ENCODE measurements at regions of chr5 and their contacts with region 1.

Region 1: GRCh38 chr5:115419846-115420585 is 123.6 kb upstream of the CCDC112 start:
- DNase-seq: no peak
- ATAC-seq: peak in 1 of 2 donors; percentile 84

Region 2: DNA sequence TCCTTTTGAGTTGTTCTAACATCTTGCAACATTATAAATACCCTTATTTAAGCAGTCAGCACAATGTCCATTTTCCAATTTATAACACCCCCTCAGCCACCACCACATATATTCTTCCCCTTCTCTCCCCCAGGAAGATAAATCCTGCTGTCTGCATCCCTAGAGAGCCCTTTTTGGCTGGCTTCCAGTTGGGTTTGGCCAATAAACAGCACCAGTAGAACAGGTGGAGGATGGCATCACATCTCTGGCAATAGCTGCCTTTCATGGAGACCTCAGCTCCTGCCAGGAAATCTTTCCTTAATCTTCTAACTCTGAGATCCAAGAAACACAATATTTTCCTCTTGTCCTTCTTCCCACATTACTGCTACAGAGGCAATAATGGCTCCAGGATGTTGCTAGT is 304.0 kb before region 1 on chr5:
- intact Hi-C with region 1: no loop called
- DNase-seq: no peak
- ATAC-seq: no peak

Region 3: DNA sequence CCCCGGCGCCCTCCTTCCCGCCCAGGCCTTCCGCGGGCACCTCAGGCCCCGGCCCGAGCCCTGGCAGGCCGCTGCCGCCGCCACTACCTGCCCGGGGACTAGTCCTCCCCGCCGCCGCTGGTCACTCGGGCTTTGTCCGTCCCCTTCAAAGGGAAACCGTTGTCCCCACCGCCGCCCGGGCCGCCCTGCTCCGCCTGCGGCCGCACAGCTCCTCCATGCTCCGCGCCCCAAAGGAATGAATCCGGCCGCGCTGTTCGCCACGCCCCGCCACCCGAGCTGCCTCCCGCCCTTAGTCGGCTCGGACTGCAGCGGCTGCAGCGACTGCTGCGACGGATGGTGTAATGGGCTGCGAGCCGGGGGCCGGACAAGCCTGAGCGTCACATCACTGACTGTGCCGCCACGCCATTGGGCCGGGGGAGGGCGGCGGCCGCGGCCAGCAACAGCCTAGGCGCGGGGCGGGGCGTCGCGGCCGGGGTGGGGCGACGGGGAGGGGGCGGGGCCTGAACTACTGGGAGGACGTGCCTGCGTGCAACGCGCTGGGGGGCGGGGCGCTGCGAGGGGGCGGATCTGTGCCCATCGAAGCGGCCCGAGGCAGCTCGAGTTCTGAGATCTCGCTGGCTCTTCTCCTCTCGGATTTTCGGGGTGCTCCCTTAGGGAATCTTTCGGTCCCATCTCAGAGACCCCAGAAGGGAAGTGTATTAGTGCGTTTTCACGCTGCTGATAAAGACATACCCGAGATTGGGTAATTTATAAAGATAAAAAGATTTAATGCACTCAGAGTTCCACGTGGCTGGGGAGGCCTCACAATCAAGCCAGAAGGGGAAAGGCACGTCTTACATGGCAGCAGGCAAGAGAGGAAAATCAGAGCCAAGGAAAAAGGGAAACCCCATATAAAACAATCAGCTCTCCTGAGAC is 124.7 kb after region 1 on chr5 and contains the start of gene FEM1C:
- intact Hi-C with region 1: loop called in 1 of 2 experiments (anchors 2 kb)
- DNase-seq: peak; percentile 98
- ATAC-seq: peak; percentile 98 to 99
- total RNA-seq, gene FEM1C: 23.2 to 31.0 TPM

Measured in left cardiac atrium (tissue), 4 donors.